ENCODE measurements at regions of chr16 and their contacts with region 1.

Region 1: GRCh38 chr16:799948-800833 is at the start of gene GNG13:
- DNase-seq: peak in 1 of 2 experiments; percentile 52
- H3K4me3 ChIP-seq: peak within 1 kb of the TSS; percentile 26
- H3K4me3 Mint-ChIP-seq: no peak within 1 kb of the TSS
- H3K27ac Mint-ChIP-seq: no peak within 1 kb of the TSS
- H3K4me1 ChIP-seq: peaks cover 9% of the 10 kb centered on the region
- H3K4me1 Mint-ChIP-seq: no peaks in the 10 kb centered on the region
- H3K27me3 ChIP-seq: no peaks in the 10 kb centered on the region
- H3K27me3 Mint-ChIP-seq: no peaks in the 10 kb centered on the region
- CTCF ChIP-seq: no peak
- total RNA-seq, gene GNG13: not detected in 2 replicates

Region 2: DNA sequence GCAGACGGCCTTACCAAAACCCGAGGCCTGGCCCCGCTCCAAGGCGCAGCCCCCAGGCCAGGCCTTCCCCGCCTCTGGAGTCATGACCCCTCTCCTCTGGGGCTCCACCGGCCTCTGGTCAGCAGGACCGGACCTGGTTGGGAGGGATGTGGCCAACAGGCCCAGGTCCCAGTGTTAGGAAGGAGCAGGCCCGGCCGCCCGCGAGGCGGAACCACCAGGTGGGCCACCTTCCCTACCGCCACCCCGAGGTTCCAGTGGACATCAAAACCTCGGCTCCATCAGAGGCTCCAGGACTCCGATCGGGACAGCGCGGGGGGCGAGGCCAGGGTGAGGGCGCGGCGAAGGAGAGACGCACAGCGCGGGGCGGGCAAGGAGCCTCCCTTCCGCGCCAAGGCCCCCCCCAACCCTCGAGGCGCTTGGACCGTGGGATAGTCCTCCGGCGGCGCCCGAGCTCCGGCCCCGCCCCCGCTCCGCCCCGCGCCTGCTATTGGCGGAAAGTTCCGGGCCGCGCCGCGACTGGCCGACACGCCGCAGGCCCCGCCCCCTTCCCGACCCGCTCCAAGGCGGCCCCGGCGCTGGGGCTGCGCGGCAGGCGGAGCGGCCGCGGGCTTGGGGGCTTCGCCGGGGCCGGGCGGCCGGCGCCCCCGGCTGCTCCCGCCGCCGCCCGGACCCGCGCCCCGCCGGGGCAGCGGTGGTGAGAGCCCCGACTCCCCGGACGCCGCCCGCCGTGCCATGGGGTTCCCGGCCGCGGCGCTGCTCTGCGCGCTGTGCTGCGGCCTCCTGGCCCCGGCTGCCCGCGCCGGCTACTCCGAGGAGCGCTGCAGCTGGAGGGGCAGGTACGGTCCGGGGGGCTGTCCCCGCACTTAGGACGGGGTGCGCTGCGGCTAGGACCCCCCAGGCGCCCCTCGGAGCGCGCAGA is 85.4 kb before region 1 on chr16 and contains the start of gene METRN:
- CTCF ChIA-PET with region 1: interaction called, 10 read pairs
- POLR2A ChIA-PET with region 1: no interaction called
- intact Hi-C with region 1: no loop called
- DNase-seq: peak; percentile 84 to 94
- H3K4me3 ChIP-seq: peak within 1 kb of the TSS; percentile 71
- H3K4me3 Mint-ChIP-seq: peak within 1 kb of the TSS; percentile 66
- H3K27ac Mint-ChIP-seq: no peak within 1 kb of the TSS
- H3K4me1 ChIP-seq: peaks cover 31% of the 10 kb centered on the region
- H3K4me1 Mint-ChIP-seq: peaks cover 7% of the 10 kb centered on the region
- H3K27me3 ChIP-seq: no peaks in the 10 kb centered on the region
- H3K27me3 Mint-ChIP-seq: no peaks in the 10 kb centered on the region
- CTCF ChIP-seq: no peak
- total RNA-seq, gene METRN: 20.0 and 23.4 TPM in 2 replicates

Region 3: DNA sequence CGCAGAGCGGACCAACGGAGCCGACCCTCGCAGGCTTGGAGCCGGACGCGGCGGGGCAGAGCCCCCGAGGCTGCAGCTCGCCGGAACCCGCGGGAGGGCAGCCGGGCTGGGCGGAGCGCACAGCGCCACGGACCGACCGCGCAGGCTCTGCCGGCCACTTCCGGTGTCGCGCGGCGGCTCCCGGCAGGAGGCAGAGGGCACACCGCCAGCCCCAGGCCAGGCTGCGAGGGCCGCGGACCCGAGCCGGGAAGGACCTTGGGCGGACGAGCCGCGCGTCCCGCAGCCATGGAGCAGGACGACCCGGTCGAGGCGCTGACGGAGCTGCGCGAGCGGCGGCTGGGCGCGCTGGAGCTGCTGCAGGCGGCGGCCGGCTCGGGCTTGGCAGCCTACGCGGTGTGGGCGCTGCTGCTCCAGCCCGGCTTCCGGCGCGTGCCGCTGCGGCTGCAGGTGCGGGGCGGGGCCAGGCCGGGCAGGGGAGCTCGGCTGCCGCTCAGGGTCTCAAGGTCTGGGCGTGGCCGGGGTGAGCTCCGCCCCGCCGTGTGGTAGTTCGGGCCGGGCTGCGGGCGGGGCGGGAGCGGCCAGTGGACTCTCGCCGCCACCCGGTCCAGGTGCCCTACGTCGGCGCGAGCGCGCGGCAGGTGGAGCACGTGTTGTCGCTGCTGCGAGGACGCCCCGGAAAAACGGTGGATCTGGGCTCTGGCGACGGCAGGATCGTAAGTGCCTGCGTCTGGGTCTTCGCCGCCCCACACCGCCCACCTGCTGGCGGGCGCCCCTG is 79.0 kb before region 1 on chr16 and contains the start of gene ANTKMT:
- CTCF ChIA-PET with region 1: interaction called, 12 read pairs
- POLR2A ChIA-PET with region 1: no interaction called
- intact Hi-C with region 1: no loop called
- DNase-seq: peak; percentile 89 to 95
- H3K4me3 ChIP-seq: peak within 1 kb of the TSS; percentile 86
- H3K4me3 Mint-ChIP-seq: peak within 1 kb of the TSS; percentile 73
- H3K27ac Mint-ChIP-seq: peak within 1 kb of the TSS; percentile 39
- H3K4me1 ChIP-seq: peaks cover 24% of the 10 kb centered on the region
- H3K4me1 Mint-ChIP-seq: no peaks in the 10 kb centered on the region
- H3K27me3 ChIP-seq: no peaks in the 10 kb centered on the region
- H3K27me3 Mint-ChIP-seq: no peaks in the 10 kb centered on the region
- CTCF ChIP-seq: no peak
- total RNA-seq, gene ANTKMT: 39.7 and 42.6 TPM in 2 replicates